CD4-positive, alpha-beta T cell (primary cell): ENCODE measurements at regions of chr7 and their contacts with region 1.

Region 1: GRCh38 chr7:29408841-29409243 is 154.8 kb upstream of the PRR15 start:
- DNase-seq: peak in 12 of 14 experiments; percentile 3 to 76 (median 31)
- ATAC-seq: no peak
- H3K4me3 ChIP-seq: no peak overlapping the region
- H3K4me3 Mint-ChIP-seq: no peak overlapping the region
- H3K27ac ChIP-seq: no peak overlapping the region
- H3K27ac Mint-ChIP-seq: no peak overlapping the region
- H3K4me1 ChIP-seq: no peaks in the 10 kb centered on the region
- H3K4me1 Mint-ChIP-seq: no peaks in the 10 kb centered on the region
- H3K27me3 ChIP-seq: no peaks in the 10 kb centered on the region
- H3K27me3 Mint-ChIP-seq: peaks cover 4% of the 10 kb centered on the region
- CTCF ChIP-seq: peak; percentile 89

Region 2: DNA sequence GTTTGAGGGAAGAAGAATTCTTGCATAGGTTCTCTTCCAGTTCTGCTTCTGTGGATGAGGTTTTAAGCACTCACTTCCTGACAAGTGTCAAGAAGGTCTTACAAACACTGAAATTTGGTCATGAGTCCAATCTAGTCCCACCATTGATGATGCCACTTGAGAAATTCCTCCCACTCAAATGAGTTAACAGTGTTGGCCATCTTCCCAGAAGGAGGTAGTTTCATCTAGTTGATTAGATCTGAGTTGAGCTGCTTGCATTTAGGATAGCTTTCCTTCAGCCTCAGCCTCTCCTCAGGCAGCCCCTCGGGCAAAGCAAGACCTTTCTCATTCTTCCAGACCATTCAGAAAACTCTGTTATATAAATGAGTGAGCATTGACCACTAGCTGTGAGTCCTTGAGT is 640.2 kb before region 1 on chr7:
- CTCF ChIA-PET with region 1: no interaction called
- POLR2A ChIA-PET with region 1: no interaction called
- intact Hi-C with region 1: no loop called
- DNase-seq: no peak
- ATAC-seq: no peak
- H3K4me3 ChIP-seq: no peak overlapping the region
- H3K4me3 Mint-ChIP-seq: no peak overlapping the region
- H3K27ac ChIP-seq: no peak overlapping the region
- H3K27ac Mint-ChIP-seq: no peak overlapping the region
- H3K4me1 ChIP-seq: no peaks in the 10 kb centered on the region
- H3K4me1 Mint-ChIP-seq: no peaks in the 10 kb centered on the region
- H3K27me3 ChIP-seq: no peaks in the 10 kb centered on the region
- H3K27me3 Mint-ChIP-seq: peaks cover 21% of the 10 kb centered on the region
- CTCF ChIP-seq: no peak

Region 3: GRCh38 chr7:28921822-28922221 is 487.0 kb before region 1 on chr7:
- CTCF ChIA-PET with region 1: interaction called, 37 read pairs
- POLR2A ChIA-PET with region 1: no interaction called
- intact Hi-C with region 1: loop called (anchors 1 kb)
- DNase-seq: peak in 7 of 14 experiments; percentile 4 to 68 (median 39)
- ATAC-seq: peak; percentile 89
- H3K4me3 ChIP-seq: no peak overlapping the region
- H3K4me3 Mint-ChIP-seq: no peak overlapping the region
- H3K27ac ChIP-seq: no peak overlapping the region
- H3K27ac Mint-ChIP-seq: no peak overlapping the region
- H3K4me1 ChIP-seq: no peaks in the 10 kb centered on the region
- H3K4me1 Mint-ChIP-seq: peaks cover 14% of the 10 kb centered on the region
- H3K27me3 ChIP-seq: no peaks in the 10 kb centered on the region
- H3K27me3 Mint-ChIP-seq: no peaks in the 10 kb centered on the region
- CTCF ChIP-seq: peak; percentile 79

Region 4: GRCh38 chr7:28926871-28927597 is 481.8 kb before region 1 on chr7:
- CTCF ChIA-PET with region 1: interaction called, 37 read pairs
- POLR2A ChIA-PET with region 1: no interaction called
- intact Hi-C with region 1: loop called (anchors 1 kb)
- DNase-seq: peak; percentile 3 to 79 (median 26)
- ATAC-seq: peak; percentile 91
- H3K4me3 ChIP-seq: peak overlapping the region; percentile 58
- H3K4me3 Mint-ChIP-seq: peak overlapping the region; percentile 91
- H3K27ac ChIP-seq: no peak overlapping the region
- H3K27ac Mint-ChIP-seq: no peak overlapping the region
- H3K4me1 ChIP-seq: peaks cover 7% of the 10 kb centered on the region
- H3K4me1 Mint-ChIP-seq: peaks cover 20% of the 10 kb centered on the region
- H3K27me3 ChIP-seq: no peaks in the 10 kb centered on the region
- H3K27me3 Mint-ChIP-seq: peaks cover 16% of the 10 kb centered on the region
- CTCF ChIP-seq: peak; percentile 78